ENCODE measurements at regions of chr20 and their contacts with region 1.

Region 1: DNA sequence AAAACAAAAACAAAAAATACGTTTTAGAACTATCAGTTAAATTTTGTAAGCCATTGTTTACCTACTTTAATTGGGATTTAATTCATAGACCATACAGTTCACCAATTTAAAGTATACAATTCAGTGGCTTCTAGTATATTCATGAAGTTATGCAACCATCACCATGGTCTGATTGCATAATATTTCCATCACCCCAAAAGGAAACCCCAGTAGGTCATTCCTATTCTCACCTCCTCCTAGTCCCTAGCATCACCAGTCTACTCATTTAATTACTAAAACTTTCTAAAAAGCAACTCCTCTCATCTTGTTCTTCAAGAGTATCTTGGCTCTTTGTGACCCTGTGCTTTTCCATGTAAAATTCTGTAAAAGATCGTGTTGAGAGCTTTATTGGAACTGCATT is 60.2 kb downstream of the ASXL1 start:
- DNase-seq: no peak
- ATAC-seq: no peak
- H3K4me3 ChIP-seq: no peak overlapping the region
- H3K27ac ChIP-seq: no peak overlapping the region
- H3K4me1 ChIP-seq: peaks cover 8% of the 10 kb centered on the region; the same call in 1 of the 2 replicates
- H3K27me3 ChIP-seq: no peaks in the 10 kb centered on the region
- CTCF ChIP-seq: no peak
- EP300 ChIP-seq: no peak
- POLR2A ChIP-seq: no peak
- RAD21 ChIP-seq: no peak

Region 2: DNA sequence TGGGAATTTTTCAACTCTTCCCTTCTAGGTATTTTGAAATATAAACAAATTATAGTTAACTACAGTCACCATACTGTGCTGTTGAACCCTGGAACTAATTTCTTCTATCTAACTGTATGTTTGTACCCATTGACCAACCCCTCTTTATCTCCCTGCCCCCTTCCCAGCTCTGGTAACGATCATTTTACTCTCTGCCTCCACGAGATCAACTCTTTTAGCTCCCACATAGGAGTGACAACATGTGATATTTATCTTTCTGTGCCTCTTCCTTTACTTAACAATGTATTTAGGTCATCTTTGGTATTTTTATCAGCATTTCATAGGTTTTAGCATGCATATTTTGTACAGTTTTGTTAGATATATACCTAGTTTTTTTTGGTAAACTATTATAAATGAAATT is 14.4 kb before region 1 on chr20:
- CTCF ChIA-PET with region 1: interaction called, 3 read pairs
- POLR2A ChIA-PET with region 1: no interaction called
- RAD21 ChIA-PET with region 1: no interaction called
- SMC1A ChIA-PET with region 1: interaction called, 10 read pairs
- in situ Hi-C with region 1: no loop called
- intact Hi-C with region 1: no loop called
- DNase-seq: no peak
- ATAC-seq: no peak
- H3K4me3 ChIP-seq: no peak overlapping the region
- H3K27ac ChIP-seq: no peak overlapping the region
- H3K4me1 ChIP-seq: no peaks in the 10 kb centered on the region
- H3K27me3 ChIP-seq: no peaks in the 10 kb centered on the region
- CTCF ChIP-seq: no peak
- EP300 ChIP-seq: no peak
- POLR2A ChIP-seq: no peak
- RAD21 ChIP-seq: no peak